ENCODE measurements at regions of chr9 and their contacts with region 1.

Region 1: DNA sequence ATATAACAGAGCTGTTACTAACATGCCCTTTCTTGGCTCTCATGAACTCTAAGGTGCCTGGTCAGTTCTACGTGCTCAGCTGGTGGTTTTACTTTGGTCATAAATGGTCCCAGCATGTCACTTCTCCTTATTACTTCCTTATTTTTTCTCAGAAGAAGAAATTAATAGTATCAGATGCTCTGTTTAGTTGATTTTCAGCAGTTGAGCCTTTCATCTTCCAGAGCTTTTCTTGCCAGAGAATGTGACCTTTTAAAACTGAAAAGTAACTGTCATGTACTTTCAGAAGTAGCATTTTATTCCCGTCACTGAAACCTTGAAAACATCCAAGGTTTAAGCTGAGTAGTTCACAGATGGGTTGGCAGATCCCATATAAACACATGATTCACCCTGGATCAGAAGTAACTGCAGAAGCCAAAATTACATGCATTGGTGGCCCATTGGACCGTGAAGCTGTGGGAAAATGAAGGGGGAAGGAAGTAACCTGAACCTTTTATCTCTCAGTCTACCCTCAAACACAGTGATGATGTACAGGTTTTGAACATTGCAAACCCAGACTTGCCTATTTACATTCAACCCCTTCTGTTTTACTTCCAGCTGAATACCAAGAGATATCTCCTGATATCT is 50.5 kb downstream of the HACD4 start:
- DNase-seq: no peak
- ATAC-seq: no peak
- H3K4me3 Mint-ChIP-seq: no peak overlapping the region
- H3K27ac Mint-ChIP-seq: no peak overlapping the region
- H3K4me1 Mint-ChIP-seq: peaks cover 4% of the 10 kb centered on the region
- H3K27me3 Mint-ChIP-seq: no peaks in the 10 kb centered on the region

Region 2: GRCh38 chr9:20950707-20951106 is 30.2 kb before region 1 on chr9:
- CTCF ChIA-PET with region 1: no interaction called
- POLR2A ChIA-PET with region 1: no interaction called
- intact Hi-C with region 1: loop called in 1 of 2 experiments (anchors 2 kb)
- DNase-seq: no peak
- ATAC-seq: no peak
- H3K4me3 Mint-ChIP-seq: no peak overlapping the region
- H3K27ac Mint-ChIP-seq: no peak overlapping the region
- H3K4me1 Mint-ChIP-seq: no peaks in the 10 kb centered on the region
- H3K27me3 Mint-ChIP-seq: no peaks in the 10 kb centered on the region